ENCODE measurements at regions of chr17 and their contacts with region 1.

Region 1: GRCh38 chr17:45307290-45308015 is 9.4 kb downstream of the MAP3K14 start:
- DNase-seq: peak; percentile 47
- H3K4me3 Mint-ChIP-seq: no peak overlapping the region
- H3K27ac Mint-ChIP-seq: peak overlapping the region; percentile 90
- H3K4me1 Mint-ChIP-seq: peaks cover 83% of the 10 kb centered on the region
- H3K27me3 Mint-ChIP-seq: no peaks in the 10 kb centered on the region

Region 2: DNA sequence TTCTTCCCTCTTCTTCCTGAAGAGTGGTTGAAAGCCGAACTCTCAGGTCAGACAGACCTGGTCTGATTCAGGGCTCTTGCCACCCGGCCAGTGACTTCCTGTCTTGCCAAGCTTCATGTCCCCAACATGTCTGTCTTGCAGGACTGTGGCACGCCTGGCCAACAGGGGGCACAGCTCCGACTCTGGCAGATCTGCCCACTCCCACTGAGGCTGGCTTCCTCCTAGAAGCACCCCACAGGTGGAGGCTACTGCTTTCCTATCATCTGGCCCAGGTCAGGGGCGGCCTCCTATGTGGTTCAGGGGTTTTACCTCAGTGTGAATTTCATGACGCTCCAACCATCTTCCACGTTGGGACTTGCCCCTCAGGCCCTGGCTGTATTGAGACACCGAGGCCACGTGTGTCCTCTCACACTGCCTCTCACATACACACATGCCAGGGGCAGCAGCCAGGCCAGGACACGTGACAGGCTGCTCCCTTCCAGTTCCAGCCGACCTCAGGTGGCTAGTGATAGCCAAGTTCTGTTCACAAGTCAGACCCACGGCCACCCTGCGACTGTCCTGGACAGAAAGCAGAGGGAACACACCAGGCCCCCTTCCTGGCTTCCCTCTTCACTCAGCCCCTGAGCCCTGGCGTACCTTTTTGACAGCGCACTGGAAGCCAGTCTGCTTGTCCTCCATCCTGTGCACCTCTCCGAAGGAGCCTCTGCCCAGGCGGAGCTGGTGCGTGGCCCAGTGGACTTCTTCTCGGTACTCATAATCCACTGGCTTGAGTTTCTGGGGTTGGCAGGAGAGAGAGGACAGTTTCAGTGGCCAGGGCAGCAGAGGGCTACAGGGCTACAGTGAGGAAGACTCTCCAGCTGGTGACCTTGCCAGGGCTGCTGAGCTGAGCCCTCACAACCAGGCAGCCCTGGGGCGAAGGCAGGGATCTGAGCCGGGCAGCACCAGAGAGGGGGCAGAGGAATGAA is 23.0 kb before region 1 on chr17:
- CTCF ChIA-PET with region 1: interaction called, 18 read pairs
- DNase-seq: peak; percentile 60
- H3K4me3 Mint-ChIP-seq: no peak overlapping the region
- H3K27ac Mint-ChIP-seq: peak overlapping the region; percentile 86
- H3K4me1 Mint-ChIP-seq: peaks cover 5% of the 10 kb centered on the region
- H3K27me3 Mint-ChIP-seq: no peaks in the 10 kb centered on the region

Region 3: DNA sequence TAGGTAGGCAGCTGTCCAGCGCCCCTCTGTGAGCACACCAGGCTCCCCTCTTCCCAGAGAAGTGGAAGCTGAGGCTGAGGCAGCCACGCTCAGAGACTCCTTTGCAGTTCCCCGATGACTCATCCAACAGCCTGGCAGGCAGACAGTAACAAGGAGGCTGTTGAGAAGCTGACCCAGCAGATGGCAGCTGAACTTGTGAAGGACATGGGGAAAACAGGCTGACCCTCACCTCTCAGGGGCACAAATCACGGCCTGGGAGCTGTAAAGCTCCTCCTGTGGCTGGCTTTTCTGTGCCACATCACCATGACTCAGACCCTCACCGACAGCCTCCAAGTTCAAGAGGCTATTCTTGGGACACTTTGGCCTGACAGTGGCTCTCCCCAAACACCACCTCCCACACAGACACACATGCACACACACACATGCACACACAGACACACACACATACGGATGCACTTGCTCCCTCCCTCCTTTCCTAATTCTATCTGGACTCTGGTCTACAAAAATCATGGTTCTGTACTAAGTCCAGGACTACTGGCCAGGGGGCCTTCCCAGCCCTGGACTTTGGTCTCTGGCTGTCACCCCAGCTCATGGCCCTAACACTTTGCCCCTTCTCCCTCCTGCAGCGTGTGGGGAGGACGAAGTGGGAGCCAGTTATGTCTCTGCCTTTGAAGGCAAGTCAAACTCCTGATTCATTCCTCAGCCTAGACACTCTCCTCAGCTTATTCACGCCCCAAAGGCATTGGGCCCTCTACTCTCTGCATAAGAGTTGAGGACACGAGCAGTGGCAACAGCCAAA is 13.8 kb before region 1 on chr17:
- CTCF ChIA-PET with region 1: interaction called, 17 read pairs
- DNase-seq: no peak
- H3K4me3 Mint-ChIP-seq: no peak overlapping the region
- H3K27ac Mint-ChIP-seq: peak overlapping the region; percentile 19
- H3K4me1 Mint-ChIP-seq: peaks cover 61% of the 10 kb centered on the region
- H3K27me3 Mint-ChIP-seq: no peaks in the 10 kb centered on the region

Region 4: DNA sequence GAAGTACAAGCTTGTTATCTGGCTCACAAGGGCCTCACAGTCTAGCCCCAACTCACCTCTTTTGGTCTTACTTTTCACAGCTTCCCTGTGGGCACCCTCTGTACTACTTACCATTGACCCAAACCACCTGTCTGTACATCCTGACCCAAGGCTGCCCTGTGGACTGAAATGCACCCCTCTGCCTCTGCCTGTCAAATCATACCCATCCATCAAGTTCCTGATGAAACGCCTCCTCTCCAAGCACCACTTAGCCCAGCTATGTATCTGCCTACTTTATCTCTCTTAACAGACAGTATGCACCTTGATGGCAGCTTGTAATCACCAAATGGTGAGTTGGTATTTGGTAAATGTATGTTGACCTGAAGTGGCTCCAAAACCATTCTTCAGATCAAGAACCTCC is 16.9 kb after region 1 on chr17:
- CTCF ChIA-PET with region 1: no interaction called
- DNase-seq: no peak
- H3K4me3 Mint-ChIP-seq: no peak overlapping the region
- H3K27ac Mint-ChIP-seq: no peak overlapping the region
- H3K4me1 Mint-ChIP-seq: peaks cover 28% of the 10 kb centered on the region
- H3K27me3 Mint-ChIP-seq: peaks cover 40% of the 10 kb centered on the region